ENCODE measurements at regions of chr2 and their contacts with region 1.

Region 1: DNA sequence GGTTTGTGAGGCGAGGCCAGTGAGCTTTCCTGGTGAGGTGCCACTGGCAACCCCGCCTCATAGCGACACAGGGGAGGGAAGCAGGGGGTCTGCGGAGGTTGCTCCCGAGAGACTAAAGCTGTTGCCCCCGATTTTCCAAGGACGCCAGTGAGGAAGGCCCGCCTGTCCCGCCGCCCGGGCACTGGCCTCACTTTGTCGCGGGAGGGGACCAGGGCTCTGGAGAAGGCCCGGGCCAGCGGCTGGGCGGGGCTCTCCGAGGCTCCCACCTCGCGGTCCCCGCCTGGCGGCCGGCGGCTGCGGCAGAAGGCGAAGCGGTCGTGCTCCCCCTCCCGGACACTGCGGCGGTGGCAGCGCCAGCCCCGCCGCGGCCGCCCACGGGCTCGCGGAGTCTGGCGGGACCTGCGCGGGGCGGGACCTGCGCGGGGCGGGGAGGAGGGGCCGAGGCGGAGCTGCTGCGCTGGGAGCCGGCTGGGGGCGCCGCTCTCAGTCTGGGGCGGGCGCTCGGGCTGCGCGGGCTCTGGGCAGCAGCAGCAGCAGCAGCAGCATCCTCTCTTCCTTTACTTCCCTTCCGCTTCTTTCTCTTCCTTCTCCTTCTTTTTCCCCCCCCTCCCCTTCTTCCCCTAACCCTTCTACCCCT is at the start of gene MAP2:
- DNase-seq: peak; percentile 75 to 91
- H3K4me3 ChIP-seq: peak within 1 kb of the TSS; percentile 36
- H3K4me3 Mint-ChIP-seq: peak within 1 kb of the TSS; percentile 79
- H3K27ac Mint-ChIP-seq: no peak within 1 kb of the TSS
- H3K4me1 ChIP-seq: peaks cover 6% of the 10 kb centered on the region
- H3K4me1 Mint-ChIP-seq: peaks cover 8% of the 10 kb centered on the region
- H3K27me3 ChIP-seq: no peaks in the 10 kb centered on the region
- H3K27me3 Mint-ChIP-seq: peaks cover 7% of the 10 kb centered on the region
- CTCF ChIP-seq: peak; percentile 83 to 93
- total RNA-seq, gene MAP2: 0.05 TPM in 1 of 2 replicates, not detected in the other

Region 2: DNA sequence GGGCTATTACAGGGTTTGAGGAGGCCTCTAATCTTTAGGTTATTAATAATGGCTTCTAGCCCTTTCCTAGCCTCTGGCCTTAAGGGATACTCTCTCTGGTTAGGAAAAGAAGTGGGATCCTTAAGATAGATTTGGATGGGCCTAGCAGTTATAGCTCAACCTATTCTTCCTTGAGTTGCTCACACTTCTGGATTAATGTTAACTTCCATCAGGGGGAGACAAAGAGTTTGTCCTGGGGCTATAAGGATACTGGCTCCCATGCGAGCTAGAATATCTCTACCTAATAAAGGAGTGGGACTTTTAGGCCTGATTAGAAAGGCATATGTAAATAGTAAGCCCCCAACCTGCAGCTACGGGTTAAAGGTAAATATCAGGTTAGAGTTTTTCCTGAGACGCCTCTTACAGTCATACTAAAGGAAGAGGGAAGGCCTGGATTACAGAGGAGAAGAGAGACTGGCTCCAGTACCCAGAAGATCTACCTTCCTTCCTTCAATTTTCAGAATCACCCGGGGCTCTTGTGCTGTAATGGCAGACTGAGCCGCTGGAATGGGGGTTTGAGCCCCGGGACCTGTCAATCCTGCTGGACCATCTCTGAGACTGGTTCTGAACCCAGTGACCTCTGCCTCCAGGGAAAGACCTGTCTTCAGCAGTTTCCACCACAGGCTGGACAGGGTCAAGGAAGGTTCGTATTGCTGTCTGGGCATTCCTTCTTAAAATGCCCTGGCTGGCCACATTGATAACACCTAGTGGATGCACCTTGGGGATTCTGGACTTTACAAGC is 1031.2 kb before region 1 on chr2:
- CTCF ChIA-PET with region 1: no interaction called
- POLR2A ChIA-PET with region 1: no interaction called
- intact Hi-C with region 1: loop called (anchors 2 kb)
- DNase-seq: no peak
- H3K4me3 ChIP-seq: no peak overlapping the region
- H3K4me3 Mint-ChIP-seq: no peak overlapping the region
- H3K27ac Mint-ChIP-seq: no peak overlapping the region
- H3K4me1 ChIP-seq: no peaks in the 10 kb centered on the region
- H3K4me1 Mint-ChIP-seq: no peaks in the 10 kb centered on the region
- H3K27me3 ChIP-seq: no peaks in the 10 kb centered on the region
- H3K27me3 Mint-ChIP-seq: peaks cover 3% of the 10 kb centered on the region
- CTCF ChIP-seq: no peak

Region 3: DNA sequence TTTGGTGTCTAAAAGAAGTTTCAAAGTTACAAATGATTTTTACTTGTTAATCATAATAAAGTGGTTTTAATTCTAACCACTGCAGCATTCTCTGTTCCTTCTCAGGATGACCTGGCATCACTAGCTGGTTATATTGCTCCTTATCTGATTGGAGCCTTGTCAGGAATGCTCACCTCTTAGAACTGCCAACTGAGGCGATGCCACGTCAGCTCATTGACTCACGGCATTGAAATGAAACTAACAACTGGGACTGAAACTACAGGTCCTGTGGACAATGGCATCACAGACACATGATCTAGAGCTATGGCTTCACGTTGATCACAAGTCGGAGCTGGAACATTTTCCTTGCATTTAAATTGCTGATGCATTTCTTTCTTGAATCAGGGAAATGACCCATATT is 54.8 kb before region 1 on chr2:
- CTCF ChIA-PET with region 1: interaction called, 5 read pairs
- POLR2A ChIA-PET with region 1: no interaction called
- intact Hi-C with region 1: loop called (anchors 1 kb)
- DNase-seq: peak; percentile 73 to 85
- H3K4me3 ChIP-seq: no peak overlapping the region
- H3K4me3 Mint-ChIP-seq: peak overlapping the region; percentile 55
- H3K27ac Mint-ChIP-seq: peak overlapping the region; percentile 80
- H3K4me1 ChIP-seq: peaks cover 24% of the 10 kb centered on the region
- H3K4me1 Mint-ChIP-seq: peaks cover 9% of the 10 kb centered on the region
- H3K27me3 ChIP-seq: no peaks in the 10 kb centered on the region
- H3K27me3 Mint-ChIP-seq: no peaks in the 10 kb centered on the region
- CTCF ChIP-seq: no peak

Region 4: GRCh38 chr2:209499069-209499468 is 75.4 kb after region 1 on chr2:
- CTCF ChIA-PET with region 1: no interaction called
- POLR2A ChIA-PET with region 1: no interaction called
- intact Hi-C with region 1: no loop called
- DNase-seq: no peak
- H3K4me3 ChIP-seq: no peak overlapping the region
- H3K4me3 Mint-ChIP-seq: no peak overlapping the region
- H3K27ac Mint-ChIP-seq: no peak overlapping the region
- H3K4me1 ChIP-seq: peaks cover 4% of the 10 kb centered on the region; the same call in 1 of the 2 replicates
- H3K4me1 Mint-ChIP-seq: peaks cover 7% of the 10 kb centered on the region
- H3K27me3 ChIP-seq: no peaks in the 10 kb centered on the region
- H3K27me3 Mint-ChIP-seq: no peaks in the 10 kb centered on the region
- CTCF ChIP-seq: no peak

Region 5: DNA sequence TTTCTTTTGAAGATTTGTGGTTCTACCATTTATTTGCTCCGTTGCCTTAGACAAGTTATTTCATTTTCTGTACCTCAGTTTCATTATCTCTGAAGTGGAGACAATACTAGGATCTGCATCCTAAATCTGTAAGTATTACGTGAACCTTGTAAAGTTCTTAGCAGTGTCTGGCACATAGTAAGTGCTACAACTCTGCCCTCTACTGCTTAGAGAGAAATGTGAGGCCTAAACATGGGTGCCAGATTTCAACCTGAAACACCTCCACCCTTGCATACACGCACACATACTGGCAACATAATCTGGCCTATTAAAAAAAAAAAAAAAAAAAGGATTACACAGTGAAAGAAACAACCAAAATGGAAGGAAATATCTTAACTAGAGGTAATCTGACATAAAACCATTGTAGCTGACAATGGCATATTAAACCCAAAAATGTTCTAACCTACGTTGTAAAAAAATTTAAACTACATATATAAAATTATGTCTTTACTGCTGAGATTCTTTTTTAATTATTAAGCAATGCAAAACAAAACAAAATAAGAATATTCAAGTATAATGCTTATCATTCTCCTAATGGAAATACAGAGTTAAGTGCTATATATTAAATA is 132.8 kb after region 1 on chr2:
- CTCF ChIA-PET with region 1: interaction called, 3 read pairs
- POLR2A ChIA-PET with region 1: no interaction called
- intact Hi-C with region 1: loop called (anchors 1 kb)
- DNase-seq: peak in 1 of 2 experiments; percentile 12
- H3K4me3 ChIP-seq: no peak overlapping the region
- H3K4me3 Mint-ChIP-seq: no peak overlapping the region
- H3K27ac Mint-ChIP-seq: no peak overlapping the region
- H3K4me1 ChIP-seq: no peaks in the 10 kb centered on the region
- H3K4me1 Mint-ChIP-seq: no peaks in the 10 kb centered on the region
- H3K27me3 ChIP-seq: no peaks in the 10 kb centered on the region
- H3K27me3 Mint-ChIP-seq: no peaks in the 10 kb centered on the region
- CTCF ChIP-seq: peak in 1 of 2 experiments; percentile 58

Region 6: DNA sequence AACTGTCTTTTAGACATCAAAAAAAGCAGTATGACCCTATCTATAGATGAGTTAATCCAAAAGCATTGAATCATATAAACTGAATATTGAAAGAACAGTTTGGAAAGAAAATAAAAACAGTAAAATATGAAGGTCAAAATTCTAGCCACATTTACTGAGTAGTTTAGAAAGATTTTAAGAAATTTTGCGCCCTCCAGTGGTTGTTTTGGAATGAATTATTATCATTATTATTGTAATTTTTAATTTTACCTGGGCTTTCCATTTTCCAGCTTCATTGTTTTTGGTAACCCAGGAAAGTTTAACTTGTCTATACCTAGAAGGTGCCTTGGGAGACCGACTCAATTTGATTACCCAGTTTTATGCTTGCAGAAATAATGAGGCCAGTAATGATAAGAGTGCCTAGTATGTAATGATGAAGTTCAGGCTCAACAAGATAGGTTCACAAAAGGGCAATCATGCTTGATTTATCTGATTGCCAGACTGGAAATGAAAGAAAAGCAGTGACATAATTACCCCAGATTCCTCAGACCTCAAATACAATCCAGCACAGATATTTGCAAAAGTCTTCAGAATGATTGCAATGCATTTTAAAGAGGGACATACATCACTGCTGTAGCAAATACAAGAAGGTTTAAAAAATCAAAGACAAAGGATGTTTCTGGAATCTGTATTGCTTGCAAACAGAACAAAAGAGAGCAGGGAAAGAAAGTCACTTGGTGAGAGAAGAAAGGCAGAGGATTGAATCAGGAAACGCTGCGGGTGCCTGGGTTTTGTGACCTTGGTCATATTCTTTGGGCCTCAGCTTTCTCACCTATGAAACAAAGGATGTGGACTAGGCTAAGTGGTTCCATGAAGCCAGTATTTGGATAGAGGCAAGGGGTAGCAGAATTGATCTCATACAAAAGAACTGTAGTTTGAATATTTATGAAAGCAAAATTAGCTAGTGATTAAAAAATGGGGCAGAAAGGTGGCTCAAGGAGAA is 154.0 kb after region 1 on chr2:
- CTCF ChIA-PET with region 1: interaction called, 3 read pairs
- POLR2A ChIA-PET with region 1: no interaction called
- intact Hi-C with region 1: loop called (anchors 2 kb)
- DNase-seq: no peak
- H3K4me3 ChIP-seq: no peak overlapping the region
- H3K4me3 Mint-ChIP-seq: no peak overlapping the region
- H3K27ac Mint-ChIP-seq: no peak overlapping the region
- H3K4me1 ChIP-seq: no peaks in the 10 kb centered on the region
- H3K4me1 Mint-ChIP-seq: no peaks in the 10 kb centered on the region
- H3K27me3 ChIP-seq: no peaks in the 10 kb centered on the region
- H3K27me3 Mint-ChIP-seq: peaks cover 4% of the 10 kb centered on the region
- CTCF ChIP-seq: peak in 1 of 2 experiments; percentile 2

Region 7: GRCh38 chr2:209960676-209961630 is 537.3 kb after region 1 on chr2:
- CTCF ChIA-PET with region 1: no interaction called
- POLR2A ChIA-PET with region 1: no interaction called
- intact Hi-C with region 1: loop called (anchors 2 kb)
- DNase-seq: peak; percentile 52 to 55
- H3K4me3 ChIP-seq: no peak overlapping the region
- H3K4me3 Mint-ChIP-seq: no peak overlapping the region
- H3K27ac Mint-ChIP-seq: no peak overlapping the region
- H3K4me1 ChIP-seq: no peaks in the 10 kb centered on the region
- H3K4me1 Mint-ChIP-seq: no peaks in the 10 kb centered on the region
- H3K27me3 ChIP-seq: no peaks in the 10 kb centered on the region
- H3K27me3 Mint-ChIP-seq: no peaks in the 10 kb centered on the region
- CTCF ChIP-seq: peak; percentile 64 to 76

Measured in Caco-2 (cell line).